AG04449 (cell line): ENCODE measurements at regions of chr5 and their contacts with region 1.

Region 1: DNA sequence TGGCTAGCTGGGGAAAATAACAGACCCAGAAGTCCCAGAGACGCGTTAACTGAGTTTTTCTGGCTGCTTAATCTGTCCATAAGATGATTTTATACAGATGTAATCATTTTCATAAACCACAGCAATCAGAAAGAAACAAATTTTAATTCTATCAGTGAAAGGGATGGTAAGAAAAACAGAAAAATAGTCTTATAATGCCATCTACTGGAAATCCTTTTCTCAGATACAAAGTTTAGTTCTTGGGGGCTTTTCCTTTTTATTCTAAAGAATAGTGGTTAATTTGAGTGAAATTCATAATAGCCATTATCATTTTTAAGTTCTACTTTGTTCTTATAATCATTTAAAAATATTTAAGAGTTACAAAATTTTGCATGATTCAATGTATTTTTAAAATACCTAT is 44.4 kb downstream of the DROSHA start:
- DNase-seq: no peak
- H3K4me3 ChIP-seq: no peak overlapping the region
- CTCF ChIP-seq: no peak

Region 2: DNA sequence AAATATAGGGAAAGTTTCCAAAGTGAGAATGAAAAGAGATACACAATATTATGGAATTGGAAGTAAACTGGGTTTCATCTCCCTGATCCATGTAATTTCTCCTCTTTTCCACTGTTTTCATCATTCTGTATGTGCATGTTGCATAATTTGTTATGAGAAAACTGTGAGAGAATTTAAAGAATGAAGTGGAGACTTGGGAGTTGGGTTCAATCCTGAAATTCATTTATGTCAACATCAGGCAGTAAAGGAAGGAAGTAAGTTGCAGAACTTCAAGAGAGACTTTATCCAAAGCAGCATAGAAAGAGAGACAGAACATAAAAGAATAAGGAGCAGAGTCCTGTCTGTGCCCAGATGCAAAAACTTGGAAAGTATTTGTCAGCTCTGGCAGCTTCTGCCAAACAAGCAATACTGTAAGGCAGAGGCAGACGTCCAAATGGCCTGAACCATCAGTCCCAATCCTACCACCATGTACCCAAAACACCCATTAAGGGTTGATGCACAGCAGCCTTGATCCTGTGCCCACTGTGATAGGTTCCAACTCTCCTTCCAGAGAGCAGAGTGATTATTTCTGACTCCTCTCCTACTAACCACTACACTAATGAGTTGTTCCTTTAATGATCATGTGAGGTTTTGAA is 719.3 kb before region 1 on chr5:
- CTCF ChIA-PET with region 1: no interaction called
- POLR2A ChIA-PET with region 1: no interaction called
- DNase-seq: no peak
- H3K4me3 ChIP-seq: no peak overlapping the region
- CTCF ChIP-seq: no peak

Region 3: DNA sequence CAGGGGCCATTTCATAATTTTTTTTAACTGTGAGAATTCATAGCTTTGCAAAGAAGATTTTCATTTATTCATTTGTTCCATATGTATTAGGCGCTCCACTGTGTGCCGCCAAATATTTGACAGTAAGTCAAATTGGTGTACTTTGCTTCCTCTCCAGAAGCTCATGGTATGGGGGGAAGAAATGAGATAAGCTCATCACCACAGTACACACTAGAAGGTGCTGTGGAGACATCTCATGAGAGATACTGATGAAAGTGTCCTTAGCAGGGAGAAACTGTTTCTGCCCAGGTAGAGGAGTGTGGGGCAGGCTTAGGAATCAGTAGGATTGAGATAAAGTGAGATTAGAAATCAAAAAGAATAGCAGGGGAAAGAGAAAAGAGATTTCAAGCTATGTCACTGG is 157.8 kb before region 1 on chr5:
- CTCF ChIA-PET with region 1: interaction called, 10 read pairs
- POLR2A ChIA-PET with region 1: no interaction called
- DNase-seq: no peak
- H3K4me3 ChIP-seq: no peak overlapping the region
- CTCF ChIP-seq: no peak